ENCODE measurements at regions of chr3 and their contacts with region 1.

Region 1: GRCh38 chr3:195863121-195864006 is 45.0 kb downstream of the TNK2 start:
- DNase-seq: peak; percentile 97

Region 2: DNA sequence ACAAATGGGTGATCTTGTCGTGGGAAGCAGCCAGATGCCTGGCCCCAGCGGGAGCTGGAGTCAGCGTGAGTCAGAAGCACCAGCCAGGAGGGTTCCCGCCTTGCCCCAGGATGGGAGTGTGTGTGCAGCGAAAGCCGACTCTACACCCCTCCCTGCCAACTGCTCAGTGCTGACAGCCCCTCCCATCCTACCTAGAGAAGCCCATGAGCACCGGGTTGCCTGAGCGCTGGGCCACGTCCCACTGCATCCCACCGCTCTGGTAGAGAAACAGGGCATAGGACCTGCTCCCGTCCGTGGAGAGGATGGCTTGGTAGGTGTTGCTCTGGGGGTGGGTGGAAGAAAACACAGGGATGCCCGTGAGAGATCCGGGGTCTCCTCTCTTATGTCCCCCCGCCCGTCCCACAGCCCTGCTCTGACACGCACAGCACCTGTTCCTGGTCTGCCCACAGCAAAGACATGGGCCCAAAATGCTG is 94.5 kb before region 1 on chr3:
- intact Hi-C with region 1: no loop called
- DNase-seq: peak; percentile 76

Region 3: GRCh38 chr3:195892105-195893043 is 29.0 kb after region 1 on chr3:
- intact Hi-C with region 1: loop called in 1 of 2 experiments (anchors 2 kb)
- DNase-seq: no peak

Region 4: GRCh38 chr3:195909644-195910508 is 46.5 kb after region 1 on chr3:
- intact Hi-C with region 1: loop called (anchors 5 to 10 kb)
- DNase-seq: peak; percentile 93

Measured in posterior vena cava (tissue), 2 donors.